ENCODE measurements at regions of chrX and their contacts with region 1.

Region 1: DNA sequence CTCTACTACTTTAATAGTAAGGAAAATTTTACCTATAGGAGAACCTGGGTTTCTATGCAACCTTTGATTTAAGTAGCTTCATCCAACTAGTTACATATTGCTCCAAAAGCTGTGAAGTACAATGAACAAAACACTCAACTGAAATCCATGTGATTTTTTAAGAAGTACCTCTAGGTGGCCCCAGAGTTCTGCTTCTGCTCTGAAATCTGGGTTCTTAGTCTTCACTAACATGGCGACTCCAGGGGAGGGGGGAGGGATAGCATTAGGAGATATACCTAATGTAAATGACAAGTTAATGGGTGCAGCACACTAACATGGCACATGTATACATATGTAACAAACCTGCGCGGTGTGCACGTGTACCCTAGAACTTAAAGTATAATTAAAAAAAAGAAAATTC is 73.4 kb upstream of the MAGEB2 start:
- DNase-seq: peak; percentile 27
- ATAC-seq: peak; percentile 71
- H3K4me3 ChIP-seq: no peak overlapping the region
- H3K27ac ChIP-seq: no peak overlapping the region
- H3K4me1 ChIP-seq: no peaks in the 10 kb centered on the region
- H3K27me3 ChIP-seq: no peaks in the 10 kb centered on the region
- CTCF ChIP-seq: peak; percentile 45
- EP300 ChIP-seq: no peak
- POLR2A ChIP-seq: no peak
- RAD21 ChIP-seq: no peak

Region 2: GRCh38 chrX:30504309-30504708 is 362.3 kb after region 1 on chrX:
- CTCF ChIA-PET with region 1: interaction called, 8 read pairs
- POLR2A ChIA-PET with region 1: no interaction called
- in situ Hi-C with region 1: loop called (anchors 10 kb)
- intact Hi-C with region 1: no loop called
- DNase-seq: peak; percentile 20
- ATAC-seq: no peak
- H3K4me3 ChIP-seq: no peak overlapping the region
- H3K27ac ChIP-seq: no peak overlapping the region
- H3K4me1 ChIP-seq: no peaks in the 10 kb centered on the region
- H3K27me3 ChIP-seq: no peaks in the 10 kb centered on the region
- CTCF ChIP-seq: peak; percentile 51
- EP300 ChIP-seq: no peak
- POLR2A ChIP-seq: no peak
- RAD21 ChIP-seq: no peak

Region 3: DNA sequence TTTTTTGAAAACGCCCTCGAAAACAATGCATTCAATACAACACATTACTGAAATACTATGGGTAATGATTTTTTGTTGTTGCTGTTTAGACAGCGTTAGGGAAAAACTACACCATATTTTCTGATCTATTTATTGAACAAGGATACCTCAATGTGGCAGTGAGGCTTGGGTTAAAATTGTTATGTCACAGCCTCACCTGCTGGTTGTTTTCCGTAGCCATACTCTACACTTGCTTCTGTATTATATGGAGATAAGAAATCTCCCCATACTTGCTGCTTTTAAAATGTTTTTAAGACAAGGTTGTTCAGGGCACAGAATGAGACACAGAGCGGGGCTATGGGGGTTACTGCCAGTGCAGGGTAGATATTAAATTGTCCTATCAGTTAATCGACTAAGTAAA is 1151.4 kb after region 1 on chrX:
- CTCF ChIA-PET with region 1: no interaction called
- POLR2A ChIA-PET with region 1: no interaction called
- in situ Hi-C with region 1: no loop called
- intact Hi-C with region 1: no loop called
- DNase-seq: peak; percentile 2
- ATAC-seq: peak; percentile 67
- H3K4me3 ChIP-seq: no peak overlapping the region
- H3K27ac ChIP-seq: no peak overlapping the region
- H3K4me1 ChIP-seq: no peaks in the 10 kb centered on the region
- H3K27me3 ChIP-seq: no peaks in the 10 kb centered on the region
- CTCF ChIP-seq: peak; percentile 50
- EP300 ChIP-seq: no peak
- POLR2A ChIP-seq: no peak
- RAD21 ChIP-seq: no peak